PC-9 (cell line): ENCODE measurements at regions of chr5 and their contacts with region 1.

Region 1: GRCh38 chr5:16934123-16934522 is 2.0 kb downstream of the MYO10 start:
- DNase-seq: peak; percentile 69 to 92
- H3K4me3 ChIP-seq: peak overlapping the region; percentile 93
- H3K27ac ChIP-seq: 0 out of 2 replicates have a peak overlapping the region, but pooled peaks have one; percentile 7
- H3K4me1 ChIP-seq: peaks cover 37% of the 10 kb centered on the region
- H3K27me3 ChIP-seq: no peaks in the 10 kb centered on the region
- CTCF ChIP-seq: peak; percentile 99

Region 2: DNA sequence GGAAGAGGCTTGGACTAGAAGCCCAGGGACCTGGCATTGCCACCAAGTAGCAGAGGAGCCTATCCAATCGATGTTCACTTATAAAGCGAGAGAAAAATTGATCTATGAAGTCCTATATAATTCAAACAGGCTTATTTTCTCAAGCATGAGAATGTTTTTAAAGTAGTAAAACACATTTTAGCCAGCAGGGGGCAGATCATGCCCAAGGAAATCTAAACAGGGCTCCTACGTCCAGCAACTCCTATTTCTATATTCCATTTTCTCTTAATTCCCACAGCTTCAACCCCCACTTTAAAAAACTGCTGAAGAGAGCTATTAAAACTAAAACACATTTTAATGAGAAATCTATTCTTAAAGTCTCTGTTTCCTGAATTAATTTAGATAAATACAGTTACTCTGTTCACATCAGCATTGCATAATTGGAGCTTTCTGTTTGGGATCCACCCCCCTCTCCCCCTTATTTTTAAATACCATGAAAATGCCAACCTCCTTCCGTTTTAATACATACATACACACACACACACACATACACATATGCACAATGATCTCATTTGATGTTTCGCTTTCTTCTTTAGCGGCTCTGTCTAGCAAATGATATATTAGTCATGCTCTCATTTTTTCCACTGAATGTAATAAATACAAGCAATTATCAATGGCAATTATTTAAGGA is 143.0 kb before region 1 on chr5:
- CTCF ChIA-PET with region 1: interaction called, 5 read pairs
- POLR2A ChIA-PET with region 1: no interaction called
- intact Hi-C with region 1: loop called (anchors 1 kb)
- DNase-seq: peak; percentile 48 to 55
- H3K4me3 ChIP-seq: no peak overlapping the region
- H3K27ac ChIP-seq: no peak overlapping the region
- H3K4me1 ChIP-seq: no peaks in the 10 kb centered on the region
- H3K27me3 ChIP-seq: no peaks in the 10 kb centered on the region
- CTCF ChIP-seq: peak; percentile 92

Region 3: DNA sequence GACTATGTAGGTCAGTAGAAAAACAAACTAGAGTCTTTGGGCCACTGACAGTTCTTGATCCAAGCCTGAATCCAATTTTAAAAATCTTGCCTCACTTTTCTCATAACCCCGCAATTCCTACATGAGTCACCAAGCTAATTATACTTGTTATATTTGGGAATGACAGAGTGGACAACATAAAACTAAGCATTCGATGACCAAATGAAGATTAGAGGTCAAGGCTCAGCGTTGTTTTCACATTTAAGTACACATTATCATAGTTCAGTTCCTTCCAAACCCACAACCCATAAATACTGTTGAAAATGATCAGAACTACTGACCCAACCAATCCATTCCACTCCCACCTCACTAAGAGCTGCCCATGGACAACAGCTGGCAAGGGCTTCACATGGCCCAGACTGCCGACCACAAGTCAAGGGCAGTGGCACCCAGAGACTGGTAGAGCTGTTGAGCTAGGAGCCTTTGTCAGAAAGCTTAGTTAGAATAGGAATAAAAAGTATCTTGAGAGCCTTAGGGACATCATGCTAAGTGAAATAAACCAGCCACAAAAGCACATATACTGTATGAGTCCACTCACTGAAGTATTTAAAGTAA is 62.3 kb before region 1 on chr5:
- CTCF ChIA-PET with region 1: no interaction called
- POLR2A ChIA-PET with region 1: no interaction called
- intact Hi-C with region 1: loop called (anchors 1 kb)
- DNase-seq: no peak
- H3K4me3 ChIP-seq: no peak overlapping the region
- H3K27ac ChIP-seq: peak overlapping the region; percentile 77; the same call in 1 of the 2 replicates
- H3K4me1 ChIP-seq: peaks cover 28% of the 10 kb centered on the region
- H3K27me3 ChIP-seq: no peaks in the 10 kb centered on the region
- CTCF ChIP-seq: no peak

Region 4: DNA sequence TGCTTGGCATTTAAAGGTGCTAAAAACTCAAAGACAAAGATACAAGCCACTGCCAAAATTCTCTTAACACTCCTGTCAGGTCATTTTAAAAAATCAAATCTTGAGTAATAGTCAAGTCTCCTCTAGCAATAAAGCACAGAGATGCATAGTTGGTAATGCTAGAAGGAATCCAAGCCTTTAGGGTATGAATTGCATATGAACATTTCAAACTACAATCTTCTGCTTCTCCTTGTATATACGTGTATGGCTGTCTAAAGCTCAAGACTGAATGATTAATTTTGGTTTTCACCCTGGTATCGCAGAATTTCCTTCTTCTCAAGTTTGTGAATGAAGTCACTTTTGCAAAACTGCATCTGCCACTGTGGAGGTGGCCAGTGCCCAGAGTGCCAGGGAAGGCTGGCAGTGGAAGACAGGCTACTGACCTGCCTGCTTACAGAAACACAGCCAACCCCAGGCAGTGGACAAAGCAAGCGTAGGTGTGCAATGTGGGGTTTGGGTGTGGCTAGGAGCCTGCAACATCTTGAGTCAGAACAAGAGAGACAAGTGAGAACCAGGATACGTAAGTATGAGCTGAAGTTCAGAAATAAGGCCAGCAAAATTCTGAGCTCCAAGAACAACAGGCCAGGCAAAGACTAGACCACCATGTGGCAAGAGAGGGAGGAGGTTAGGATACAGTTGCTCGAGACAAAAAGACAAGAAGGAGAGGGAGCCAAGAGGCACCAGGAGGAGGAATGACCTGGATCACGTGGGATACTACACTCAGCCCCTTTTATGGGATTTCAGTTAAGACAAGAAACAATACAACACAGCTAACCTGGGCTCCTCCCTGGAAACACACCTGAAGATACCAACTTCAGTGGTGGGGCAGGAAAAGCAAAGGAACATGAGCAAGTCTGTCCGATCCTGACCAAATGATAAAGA is 20.7 kb before region 1 on chr5:
- CTCF ChIA-PET with region 1: interaction called, 15 read pairs
- POLR2A ChIA-PET with region 1: interaction called, 7 read pairs
- intact Hi-C with region 1: loop called (anchors 1 kb)
- DNase-seq: peak; percentile 83 to 92
- H3K4me3 ChIP-seq: peak overlapping the region; percentile 15; the same call in 1 of the 2 replicates
- H3K27ac ChIP-seq: peak overlapping the region; percentile 74
- H3K4me1 ChIP-seq: peaks cover 62% of the 10 kb centered on the region
- H3K27me3 ChIP-seq: no peaks in the 10 kb centered on the region
- CTCF ChIP-seq: no peak

Region 5: DNA sequence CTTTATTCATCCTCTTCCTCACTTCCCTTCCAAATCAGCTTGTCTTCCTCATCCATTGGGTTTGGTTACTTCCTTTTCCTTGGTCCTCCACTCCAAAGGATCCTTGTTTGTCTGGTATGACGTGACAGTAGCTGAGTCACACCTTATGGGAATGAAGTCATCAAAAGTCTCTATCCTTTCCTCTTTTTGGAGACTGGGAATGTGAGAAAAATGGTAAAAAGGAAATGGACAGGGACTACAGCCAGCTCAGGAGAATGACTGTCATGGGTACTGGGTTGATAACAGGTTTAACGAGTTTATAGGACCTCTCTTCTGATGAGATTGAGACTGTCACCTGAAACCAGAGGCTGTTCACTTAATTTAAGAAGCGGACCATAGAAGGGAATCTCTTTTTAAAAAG is 78.2 kb after region 1 on chr5:
- CTCF ChIA-PET with region 1: no interaction called
- POLR2A ChIA-PET with region 1: interaction called, 6 read pairs
- intact Hi-C with region 1: loop called (anchors 1 kb)
- DNase-seq: peak; percentile 59 to 90
- H3K4me3 ChIP-seq: no peak overlapping the region
- H3K27ac ChIP-seq: peak overlapping the region; percentile 69
- H3K4me1 ChIP-seq: peaks cover 22% of the 10 kb centered on the region
- H3K27me3 ChIP-seq: no peaks in the 10 kb centered on the region
- CTCF ChIP-seq: no peak

Region 6: GRCh38 chr5:17147617-17148016 is 213.5 kb after region 1 on chr5:
- CTCF ChIA-PET with region 1: no interaction called
- POLR2A ChIA-PET with region 1: no interaction called
- intact Hi-C with region 1: loop called (anchors 5 kb)
- DNase-seq: no peak
- H3K4me3 ChIP-seq: no peak overlapping the region
- H3K27ac ChIP-seq: no peak overlapping the region
- H3K4me1 ChIP-seq: peaks cover 16% of the 10 kb centered on the region
- H3K27me3 ChIP-seq: peaks cover 9% of the 10 kb centered on the region; the same call in 1 of the 2 replicates
- CTCF ChIP-seq: no peak